Activated T-helper 1 cell treated with anti-CD3 and anti-CD28 coated beads, Interleukin-12 subunit alpha, Interleukin-12 subunit beta, Interleukin-2, Interleukin-4 antibody, amounts not matched to agents 30 ng/mL and 10 ng/mL and 1 ng/mL, durations not matched to agents 14 hours and 24 hours and 36 hours (primary cell): ENCODE measurements at regions of chr1 and their contacts with region 1.

Region 1: GRCh38 chr1:103365860-103366569 is 159.5 kb upstream of the RNPC3 start:
- DNase-seq: no peak
- H3K4me3 Mint-ChIP-seq: no peak overlapping the region
- H3K27ac Mint-ChIP-seq: no peak overlapping the region
- H3K4me1 Mint-ChIP-seq: no peaks in the 10 kb centered on the region
- H3K27me3 Mint-ChIP-seq: no peaks in the 10 kb centered on the region

Region 2: GRCh38 chr1:103333181-103333580 is 32.8 kb before region 1 on chr1:
- intact Hi-C with region 1: no loop called
- DNase-seq: no peak
- H3K4me3 Mint-ChIP-seq: no peak overlapping the region
- H3K27ac Mint-ChIP-seq: no peak overlapping the region
- H3K4me1 Mint-ChIP-seq: no peaks in the 10 kb centered on the region
- H3K27me3 Mint-ChIP-seq: no peaks in the 10 kb centered on the region

Region 3: DNA sequence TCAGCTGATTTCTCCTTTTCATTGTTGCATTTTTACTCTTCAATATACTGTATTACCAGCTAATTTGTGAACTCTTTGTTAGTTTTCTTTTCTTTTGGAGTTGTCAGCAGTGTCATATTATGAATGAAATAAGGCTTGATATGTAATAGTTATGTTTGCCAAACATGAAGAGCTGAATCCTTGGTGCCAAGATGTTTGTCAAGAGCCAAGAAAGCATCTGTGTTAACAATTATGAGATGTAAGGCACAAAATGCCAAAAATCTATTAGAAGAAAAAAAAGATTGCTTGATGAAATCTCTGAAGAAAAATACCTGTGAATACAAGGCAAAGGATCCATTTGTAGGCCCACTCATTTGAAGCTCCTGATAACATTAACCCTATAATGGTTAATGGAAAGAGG is 111.1 kb after region 1 on chr1:
- intact Hi-C with region 1: no loop called
- DNase-seq: no peak
- H3K4me3 Mint-ChIP-seq: no peak overlapping the region
- H3K27ac Mint-ChIP-seq: no peak overlapping the region
- H3K4me1 Mint-ChIP-seq: no peaks in the 10 kb centered on the region
- H3K27me3 Mint-ChIP-seq: no peaks in the 10 kb centered on the region

Region 4: GRCh38 chr1:103514920-103515503 is 149.0 kb after region 1 on chr1:
- intact Hi-C with region 1: no loop called
- DNase-seq: no peak
- H3K4me3 Mint-ChIP-seq: no peak overlapping the region
- H3K27ac Mint-ChIP-seq: no peak overlapping the region
- H3K4me1 Mint-ChIP-seq: peaks cover 18% of the 10 kb centered on the region
- H3K27me3 Mint-ChIP-seq: no peaks in the 10 kb centered on the region

Region 5: DNA sequence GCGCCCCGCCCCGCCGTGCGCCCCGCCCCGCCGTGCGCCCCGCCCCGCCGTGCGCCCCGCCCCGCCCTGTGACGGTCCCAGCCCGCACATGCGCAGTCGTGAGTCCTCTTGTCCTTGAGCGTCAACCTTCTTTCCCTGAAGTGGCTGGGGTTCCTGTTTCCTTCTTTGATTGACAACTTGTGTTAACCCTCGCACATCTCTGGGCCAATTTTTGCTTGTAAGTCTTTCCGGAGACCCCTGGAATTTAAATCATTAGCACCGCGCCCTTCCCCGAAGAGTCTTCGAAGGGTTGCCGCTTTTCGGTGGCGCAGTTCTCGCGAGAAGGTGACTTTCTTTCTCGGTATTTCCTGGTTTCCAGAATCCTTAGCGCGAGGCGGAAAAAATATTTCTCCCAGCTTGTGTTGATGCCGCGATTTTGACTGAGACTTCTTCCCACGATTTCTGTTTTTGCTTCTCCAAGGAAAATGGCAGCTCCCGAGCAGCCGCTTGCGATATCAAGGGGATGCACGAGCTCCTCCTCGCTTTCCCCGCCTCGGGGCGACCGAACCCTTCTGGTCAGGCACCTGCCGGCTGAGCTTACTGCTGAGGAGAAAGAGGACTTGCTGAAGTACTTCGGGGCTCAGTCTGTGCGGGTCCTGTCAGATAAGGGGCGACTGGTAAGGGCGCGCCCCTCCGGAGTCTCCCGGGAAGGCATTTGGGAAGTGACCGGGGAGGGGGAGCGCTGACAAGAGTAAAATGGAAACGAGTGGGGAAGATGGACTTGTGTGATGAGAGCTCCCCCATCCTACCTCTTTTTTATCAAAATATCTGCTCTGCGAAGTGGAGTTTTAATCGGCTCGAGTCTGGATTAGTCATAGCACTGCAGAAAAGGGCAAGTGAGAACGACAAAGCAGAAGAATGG is 159.8 kb after region 1 on chr1 and contains the start of gene RNPC3:
- intact Hi-C with region 1: loop called (anchors 1 kb)
- DNase-seq: peak; percentile 80
- H3K4me3 Mint-ChIP-seq: peak within 1 kb of the TSS; percentile 98
- H3K27ac Mint-ChIP-seq: peak within 1 kb of the TSS; percentile 99
- H3K4me1 Mint-ChIP-seq: peaks cover 44% of the 10 kb centered on the region
- H3K27me3 Mint-ChIP-seq: peaks cover 6% of the 10 kb centered on the region
- total RNA-seq, gene RNPC3: 17.1 and 20.6 TPM in 2 replicates